SK-N-SH (cell line): ENCODE measurements at regions of chr17 and their contacts with region 1.

Region 1: DNA sequence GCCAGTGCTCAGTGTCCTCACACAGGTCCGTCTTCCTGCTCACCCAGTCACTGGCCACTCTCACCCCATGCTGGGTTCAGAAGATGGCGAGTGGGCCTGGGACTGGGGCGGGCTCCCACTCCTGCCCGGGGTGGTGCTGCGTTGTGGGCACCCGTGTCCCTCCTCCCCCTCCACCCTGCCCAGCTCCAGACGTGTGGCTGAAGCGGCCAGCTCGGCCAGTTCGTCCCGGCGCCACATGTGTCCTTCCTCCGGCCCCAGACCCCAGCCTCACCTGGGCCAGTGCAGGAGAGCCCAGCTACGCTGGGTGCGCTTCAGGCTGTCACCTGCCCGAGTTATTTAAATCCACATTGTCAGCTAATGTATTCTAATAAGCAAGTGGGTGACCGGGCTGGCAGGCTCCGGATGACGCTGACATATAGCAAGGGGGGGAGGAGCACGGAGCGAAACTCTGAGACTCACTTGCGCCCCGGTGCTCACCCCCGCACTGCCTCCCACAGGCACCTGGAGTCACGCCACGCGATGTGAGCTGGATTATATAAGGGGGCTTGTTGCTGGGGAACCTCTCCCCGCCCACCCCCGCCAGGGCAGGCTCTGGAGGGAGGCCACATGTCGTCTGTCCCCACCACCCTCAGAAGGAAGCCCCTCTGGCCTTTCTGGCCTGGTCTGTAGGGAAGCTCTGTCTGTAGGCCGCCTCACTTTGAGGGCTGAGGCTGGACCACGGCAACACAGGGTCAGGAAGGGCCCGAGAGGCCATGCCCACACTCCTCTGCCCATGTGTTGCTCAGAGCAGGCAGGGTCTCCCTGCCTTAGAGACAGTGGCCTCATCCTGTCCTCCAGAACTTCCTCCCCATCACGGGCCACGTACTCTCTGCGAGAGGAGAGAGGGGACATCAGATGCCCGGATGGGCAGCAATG is 7.1 kb upstream of the BAIAP2 start:
- DNase-seq: peak; percentile 68
- H3K4me3 ChIP-seq: no peak overlapping the region
- H3K27ac ChIP-seq: no peak overlapping the region
- H3K4me1 ChIP-seq: peaks cover 0 to 21% of the 10 kb centered on the region in 2 experiments; a peak in 1 of 4 replicates
- H3K27me3 ChIP-seq: peaks cover 25% of the 10 kb centered on the region
- CTCF ChIP-seq: no peak
- EP300 ChIP-seq: no peak
- RAD21 ChIP-seq: no peak

Region 2: DNA sequence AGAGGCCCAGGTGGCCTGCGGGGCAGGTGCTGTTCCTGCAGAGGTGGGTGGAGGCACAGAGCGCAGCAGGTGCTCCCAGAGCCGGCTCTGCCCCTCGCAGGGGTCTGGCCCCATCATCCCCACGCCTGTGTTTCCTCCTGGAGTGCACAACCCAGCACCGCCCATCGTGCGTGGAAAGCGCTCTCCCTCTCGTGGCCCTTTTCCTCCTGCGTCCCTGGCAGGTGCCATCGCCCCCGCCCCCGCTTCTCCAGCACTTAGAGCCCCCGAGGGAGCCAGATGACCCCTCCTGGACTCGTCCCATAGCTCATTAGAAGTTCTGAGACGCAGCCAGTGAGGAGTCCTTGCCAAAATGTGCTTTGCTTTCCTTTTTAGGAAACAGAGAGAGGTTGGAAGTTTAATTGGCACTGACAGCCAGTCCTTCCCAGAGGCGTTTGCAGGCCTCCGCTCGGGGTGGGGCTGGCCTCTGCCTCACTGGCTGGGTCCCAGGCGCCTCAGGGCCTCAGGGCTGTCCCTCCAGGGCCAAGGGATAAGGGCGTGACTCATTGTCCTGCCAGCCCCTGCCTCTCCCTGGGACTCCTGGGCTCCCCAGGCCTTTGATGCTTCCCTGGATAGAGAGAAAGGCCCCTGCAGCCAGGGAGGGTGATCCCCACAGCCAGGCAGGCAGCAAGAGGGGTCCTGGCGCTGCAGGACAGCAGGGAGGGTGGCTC is 68.4 kb before region 1 on chr17:
- CTCF ChIA-PET with region 1: no interaction called
- POLR2A ChIA-PET with region 1: no interaction called
- DNase-seq: peak; percentile 69
- H3K4me3 ChIP-seq: no peak overlapping the region
- H3K27ac ChIP-seq: peak overlapping the region in 1 of 2 experiments; percentile 79; a peak in 2 of 4 replicates
- H3K4me1 ChIP-seq: peaks cover 0 to 37% of the 10 kb centered on the region in 2 experiments; a peak in 2 of 4 replicates
- H3K27me3 ChIP-seq: no peaks in the 10 kb centered on the region
- CTCF ChIP-seq: no peak
- EP300 ChIP-seq: no peak
- RAD21 ChIP-seq: no peak

Region 3: GRCh38 chr17:81002409-81003361 is 25.2 kb before region 1 on chr17:
- CTCF ChIA-PET with region 1: interaction called, 102 read pairs
- POLR2A ChIA-PET with region 1: no interaction called
- DNase-seq: peak; percentile 92
- H3K4me3 ChIP-seq: no peak overlapping the region
- H3K27ac ChIP-seq: no peak overlapping the region
- H3K4me1 ChIP-seq: peaks cover 5 to 14% of the 10 kb centered on the region in 2 experiments; a peak in 1 of 4 replicates
- H3K27me3 ChIP-seq: peaks cover 51% of the 10 kb centered on the region
- CTCF ChIP-seq: no peak
- EP300 ChIP-seq: 0 out of 4 replicates have a peak, but pooled peaks of 1 of the 2 experiments have one; percentile 13
- RAD21 ChIP-seq: no peak

Region 4: DNA sequence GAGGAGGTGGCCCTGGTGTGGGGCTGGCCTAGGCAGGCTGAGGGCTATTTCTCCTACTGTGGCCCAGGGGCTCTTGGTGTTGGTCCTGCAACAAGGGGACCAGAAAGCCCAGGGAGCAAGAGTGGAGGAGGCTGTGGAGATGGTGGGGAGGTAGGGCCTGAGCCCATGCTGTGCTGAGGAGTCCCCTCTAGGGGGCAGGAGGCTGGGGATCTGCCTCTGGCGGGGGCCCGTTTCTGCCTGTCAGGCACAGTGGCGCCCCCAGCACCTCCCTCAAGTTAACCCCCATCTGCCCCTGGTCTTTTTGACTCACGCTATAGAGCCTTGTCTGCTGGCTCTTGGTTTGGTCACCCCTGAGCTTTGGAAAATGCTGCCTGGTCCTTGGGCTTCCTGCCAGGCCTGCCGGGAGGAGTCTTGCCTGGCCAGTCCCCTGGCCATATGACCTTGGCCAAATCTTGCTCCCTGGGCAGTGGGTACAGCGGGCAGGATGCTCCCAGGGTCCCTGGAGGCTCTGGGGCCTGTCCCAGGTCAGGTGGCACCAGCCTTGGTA is 13.0 kb after region 1 on chr17:
- CTCF ChIA-PET with region 1: interaction called, 96 read pairs
- POLR2A ChIA-PET with region 1: no interaction called
- DNase-seq: peak; percentile 77
- H3K4me3 ChIP-seq: no peak overlapping the region; a peak in 1 of 4 replicates
- H3K27ac ChIP-seq: peak overlapping the region in 1 of 2 experiments; percentile 30; a peak in 2 of 4 replicates
- H3K4me1 ChIP-seq: peaks cover 30 to 85% of the 10 kb centered on the region in 2 experiments; a peak in 3 of 4 replicates
- H3K27me3 ChIP-seq: no peaks in the 10 kb centered on the region
- CTCF ChIP-seq: peak; percentile 67
- EP300 ChIP-seq: no peak
- RAD21 ChIP-seq: no peak

Region 5: GRCh38 chr17:81057079-81057730 is 29.4 kb after region 1 on chr17:
- CTCF ChIA-PET with region 1: interaction called, 21 read pairs
- POLR2A ChIA-PET with region 1: no interaction called
- DNase-seq: peak; percentile 84
- H3K4me3 ChIP-seq: no peak overlapping the region
- H3K27ac ChIP-seq: peak overlapping the region in 1 of 2 experiments; percentile 45; a peak in 2 of 4 replicates
- H3K4me1 ChIP-seq: peaks cover 9 to 24% of the 10 kb centered on the region in 2 experiments; a peak in 1 of 4 replicates
- H3K27me3 ChIP-seq: no peaks in the 10 kb centered on the region
- CTCF ChIP-seq: no peak
- EP300 ChIP-seq: no peak
- RAD21 ChIP-seq: peak; percentile 35; the same call in 1 of the 2 replicates

Region 6: GRCh38 chr17:81119223-81120148 is 91.6 kb after region 1 on chr17:
- CTCF ChIA-PET with region 1: interaction called, 89 read pairs
- POLR2A ChIA-PET with region 1: no interaction called
- DNase-seq: peak; percentile 96
- H3K4me3 ChIP-seq: no peak overlapping the region
- H3K27ac ChIP-seq: no peak overlapping the region
- H3K4me1 ChIP-seq: peaks cover 0 to 29% of the 10 kb centered on the region in 2 experiments; a peak in 1 of 4 replicates
- H3K27me3 ChIP-seq: no peaks in the 10 kb centered on the region
- CTCF ChIP-seq: no peak
- EP300 ChIP-seq: no peak
- RAD21 ChIP-seq: no peak